ENCODE measurements at regions of chr3 and their contacts with region 1.

Region 1: GRCh38 chr3:143001369-143002082 is at the start of gene U2SURP:
- DNase-seq: peak; percentile 83 to 96 (median 86)
- ATAC-seq: peak; percentile 93
- H3K4me3 ChIP-seq: peak within 1 kb of the TSS; percentile 89
- H3K4me3 Mint-ChIP-seq: peak within 1 kb of the TSS; percentile 97
- H3K27ac ChIP-seq: peak within 1 kb of the TSS; percentile 93 to 94
- H3K27ac Mint-ChIP-seq: peak within 1 kb of the TSS; percentile 97
- H3K4me1 ChIP-seq: peaks cover 23% of the 10 kb centered on the region
- H3K4me1 Mint-ChIP-seq: peaks cover 55% of the 10 kb centered on the region
- H3K27me3 ChIP-seq: peaks cover 0 to 4% of the 10 kb centered on the region in 2 experiments
- H3K27me3 Mint-ChIP-seq: peaks cover 14% of the 10 kb centered on the region
- CTCF ChIP-seq: no peak
- total RNA-seq, gene U2SURP: 164 to 179 TPM

Region 2: GRCh38 chr3:142028243-142028777 is 973.2 kb before region 1 on chr3:
- CTCF ChIA-PET with region 1: no interaction called
- POLR2A ChIA-PET with region 1: interaction called, 3 read pairs
- intact Hi-C with region 1: loop called (anchors 5 kb)
- DNase-seq: peak in 5 of 14 experiments; percentile 10 to 70 (median 63)
- ATAC-seq: peak; percentile 88
- H3K4me3 ChIP-seq: peak overlapping the region; percentile 42
- H3K4me3 Mint-ChIP-seq: peak overlapping the region; percentile 96
- H3K27ac ChIP-seq: no peak overlapping the region
- H3K27ac Mint-ChIP-seq: peak overlapping the region; percentile 46
- H3K4me1 ChIP-seq: no peaks in the 10 kb centered on the region
- H3K4me1 Mint-ChIP-seq: peaks cover 36% of the 10 kb centered on the region
- H3K27me3 ChIP-seq: no peaks in the 10 kb centered on the region
- H3K27me3 Mint-ChIP-seq: no peaks in the 10 kb centered on the region
- CTCF ChIP-seq: no peak

Region 3: DNA sequence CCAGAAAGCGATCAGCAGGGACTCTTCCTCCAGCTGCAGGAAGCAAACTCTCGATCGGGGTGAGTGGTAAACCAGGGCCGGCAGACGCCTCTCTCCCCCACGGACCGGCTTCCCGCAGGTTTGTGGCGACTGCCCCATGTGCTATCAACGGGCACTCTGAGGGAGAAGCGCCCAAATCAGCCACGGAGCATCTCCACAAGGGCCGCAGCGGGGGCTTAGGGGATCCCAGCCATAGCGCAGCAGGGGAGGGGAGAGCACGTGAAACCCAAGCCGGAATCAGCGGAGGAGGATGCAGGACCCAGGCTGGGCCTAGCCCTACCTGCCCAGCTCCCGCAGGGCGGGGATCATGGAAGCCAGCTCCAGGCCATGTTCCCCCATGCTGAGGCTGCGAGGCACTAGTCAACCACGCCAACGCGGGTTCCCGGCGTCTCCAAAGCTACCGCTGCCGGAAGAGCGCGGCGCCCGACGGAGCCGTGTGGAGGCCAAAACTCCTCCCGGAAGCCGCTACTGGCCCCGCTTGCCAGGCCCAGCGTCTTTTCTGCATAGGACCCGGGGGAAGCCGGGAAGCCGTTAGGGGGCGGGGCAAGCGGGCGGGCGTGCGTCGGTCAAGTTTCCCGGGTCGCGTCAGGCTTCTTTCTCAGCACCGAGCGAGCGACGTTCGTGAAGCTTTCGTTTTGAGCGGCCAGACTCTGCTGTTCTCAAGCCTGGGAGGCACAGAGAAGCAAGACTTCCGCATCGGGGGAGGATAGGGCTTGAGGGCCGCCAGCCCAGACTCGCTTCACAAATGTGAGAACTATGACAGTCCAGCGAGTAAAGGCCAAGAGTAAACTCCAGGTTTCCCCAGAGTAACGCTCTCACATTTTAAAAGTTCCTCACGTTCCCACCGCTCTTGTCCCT is 423.0 kb before region 1 on chr3 and contains the start of gene ATR:
- CTCF ChIA-PET with region 1: no interaction called
- POLR2A ChIA-PET with region 1: interaction called, 73 read pairs
- intact Hi-C with region 1: loop called (anchors 2 to 5 kb)
- DNase-seq: peak; percentile 91 to 98 (median 96)
- ATAC-seq: peak; percentile 93
- H3K4me3 ChIP-seq: peak within 1 kb of the TSS; percentile 95
- H3K4me3 Mint-ChIP-seq: peak within 1 kb of the TSS; percentile 99
- H3K27ac ChIP-seq: peak within 1 kb of the TSS; percentile 90 to 93
- H3K27ac Mint-ChIP-seq: peak within 1 kb of the TSS; percentile 97
- H3K4me1 ChIP-seq: peaks cover 15% of the 10 kb centered on the region
- H3K4me1 Mint-ChIP-seq: peaks cover 64% of the 10 kb centered on the region
- H3K27me3 ChIP-seq: no peaks in the 10 kb centered on the region
- H3K27me3 Mint-ChIP-seq: peaks cover 6% of the 10 kb centered on the region
- CTCF ChIP-seq: no peak
- total RNA-seq, gene ATR: 29.0 to 29.5 TPM